ENCODE measurements at regions of chr17 and their contacts with region 1.

Region 1: GRCh38 chr17:50707289-50708049 is at the start of gene ANKRD40:
- DNase-seq: peak; percentile 87 to 95 (median 91)
- ATAC-seq: peak; percentile 94
- H3K4me3 ChIP-seq: peak within 1 kb of the TSS; percentile 79
- H3K4me3 Mint-ChIP-seq: peak within 1 kb of the TSS; percentile 88 to 97 (median 93)
- H3K27ac ChIP-seq: peak within 1 kb of the TSS; percentile 88
- H3K27ac Mint-ChIP-seq: peak within 1 kb of the TSS; percentile 93 to 99 (median 97)
- H3K4me1 ChIP-seq: peaks cover 13 to 20% of the 10 kb centered on the region in 2 donors
- H3K4me1 Mint-ChIP-seq: peaks cover 23 to 68% (median 47%) of the 10 kb centered on the region in 7 donors
- H3K27me3 ChIP-seq: no peaks in the 10 kb centered on the region
- H3K27me3 Mint-ChIP-seq: peaks cover 0 to 2% (median 0%) of the 10 kb centered on the region in 5 donors
- total RNA-seq, gene ANKRD40: 27.4 to 37.2 (median 33.4) TPM

Region 2: DNA sequence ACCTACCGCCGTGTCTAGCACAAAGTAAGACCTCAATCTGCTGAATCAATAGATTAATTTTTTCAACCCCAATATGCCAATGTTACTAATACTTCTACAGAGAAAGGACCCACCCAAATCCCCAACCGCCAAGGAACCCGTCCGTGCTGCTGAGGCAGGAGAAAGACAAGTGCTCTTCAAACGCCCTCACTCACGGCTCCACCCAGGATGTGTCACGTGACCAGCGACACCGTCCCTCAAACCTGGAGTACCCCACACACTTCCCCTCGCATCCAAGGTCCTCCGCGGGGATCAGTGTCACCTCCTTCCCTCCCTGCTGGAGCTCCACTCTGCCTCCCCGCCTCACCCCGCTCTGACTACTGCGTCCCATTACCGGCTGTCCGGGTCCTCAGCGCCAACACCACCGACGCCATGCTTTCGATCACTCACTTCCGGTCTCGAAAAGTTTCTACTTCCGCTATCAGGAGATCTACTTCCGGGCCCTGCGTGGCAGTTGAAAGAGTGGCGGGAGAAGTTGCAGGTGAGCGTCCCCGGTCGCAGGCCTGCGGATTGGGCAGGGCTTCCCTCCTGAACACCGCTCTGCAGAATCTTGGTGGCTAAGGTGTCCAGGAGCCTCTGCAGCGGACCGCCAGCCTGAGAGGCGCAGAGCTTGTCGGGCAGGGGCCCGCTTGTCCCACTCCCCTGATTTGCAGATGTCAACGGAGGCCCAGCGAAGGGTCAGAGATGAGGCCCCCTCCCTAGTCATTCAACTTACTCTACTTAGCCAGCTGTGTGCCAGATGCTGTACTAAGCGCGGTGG is 334.5 kb before region 1 on chr17 and contains the starts of genes EME1 and MRPL27:
- CTCF ChIA-PET with region 1: no interaction called
- POLR2A ChIA-PET with region 1: no interaction called
- intact Hi-C with region 1: loop called (anchors 1 to 5 kb)
- DNase-seq: peak; percentile 81 to 95 (median 92)
- ATAC-seq: peak; percentile 94
- H3K4me3 ChIP-seq: peak within 1 kb of the TSS; percentile 99
- H3K4me3 Mint-ChIP-seq: peak within 1 kb of the TSS; percentile 92 to 100 (median 98)
- H3K27ac ChIP-seq: peak within 1 kb of the TSS; percentile 99
- H3K27ac Mint-ChIP-seq: peak within 1 kb of the TSS; percentile 97 to 100 (median 99)
- H3K4me1 ChIP-seq: peaks cover 9 to 13% of the 10 kb centered on the region in 2 donors
- H3K4me1 Mint-ChIP-seq: peaks cover 18 to 41% (median 31%) of the 10 kb centered on the region in 7 donors
- H3K27me3 ChIP-seq: no peaks in the 10 kb centered on the region
- H3K27me3 Mint-ChIP-seq: no peaks in the 10 kb centered on the region
- total RNA-seq, gene EME1: 0.61 to 17.5 (median 2.2) TPM
- total RNA-seq, gene MRPL27: 29.5 to 64.7 (median 32.0) TPM

Region 3: DNA sequence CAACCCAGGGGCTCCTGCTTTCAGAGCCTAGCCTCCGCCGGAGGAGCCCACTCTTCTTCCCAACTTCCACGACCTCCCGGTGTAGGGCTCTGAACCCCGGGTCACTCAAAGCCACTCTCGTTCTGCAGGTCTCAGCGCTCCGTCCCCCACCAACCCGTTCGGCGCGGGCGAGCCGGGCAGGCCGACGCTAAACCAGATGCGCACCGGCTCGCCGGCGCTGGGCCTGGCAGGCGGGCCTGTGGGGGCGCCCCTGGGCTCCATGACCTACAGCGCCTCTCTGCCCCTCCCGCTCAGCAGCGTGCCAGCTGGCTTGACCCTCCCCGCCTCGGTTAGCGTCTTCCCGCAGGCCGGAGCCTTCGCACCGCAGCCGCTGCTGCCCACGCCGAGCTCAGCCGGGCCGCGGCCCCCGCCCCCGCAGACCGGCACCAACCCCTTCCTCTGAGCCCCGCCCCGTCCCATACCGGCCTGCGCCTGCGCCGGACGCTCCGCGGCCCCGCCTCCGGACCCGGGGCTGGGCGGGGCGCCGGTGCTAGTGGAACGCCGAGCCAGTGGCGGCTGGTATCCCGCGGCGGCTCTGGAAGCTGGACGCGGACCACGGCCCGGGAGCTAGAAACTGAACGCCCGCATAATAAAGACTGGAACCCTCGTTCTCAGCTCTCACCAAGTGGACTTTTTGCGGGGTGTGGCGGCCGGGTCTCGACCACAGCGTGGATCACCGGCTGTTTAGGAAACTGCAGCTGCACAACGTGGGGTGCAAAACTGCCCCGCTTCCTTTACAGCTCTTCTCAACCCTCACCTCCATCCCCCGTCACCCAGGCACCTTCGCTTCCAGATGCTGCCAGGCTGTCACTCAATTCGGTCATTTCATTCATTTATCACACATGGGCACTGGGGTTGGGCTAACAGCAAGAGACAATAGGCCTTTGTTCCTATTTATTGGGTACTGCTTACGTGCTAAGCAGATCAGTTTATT is 165.5 kb before region 1 on chr17:
- CTCF ChIA-PET with region 1: no interaction called
- POLR2A ChIA-PET with region 1: interaction called, 5 read pairs
- intact Hi-C with region 1: loop called (anchors 5 kb)
- DNase-seq: peak; percentile 68 to 96 (median 83)
- ATAC-seq: peak; percentile 90
- H3K4me3 ChIP-seq: peak overlapping the region; percentile 61
- H3K4me3 Mint-ChIP-seq: peak overlapping the region; percentile 83 to 88 (median 85)
- H3K27ac ChIP-seq: peak overlapping the region; percentile 61
- H3K27ac Mint-ChIP-seq: peak overlapping the region; percentile 24 to 90 (median 67)
- H3K4me1 ChIP-seq: peaks cover 10 to 16% of the 10 kb centered on the region in 2 donors
- H3K4me1 Mint-ChIP-seq: peaks cover 0 to 22% (median 22%) of the 10 kb centered on the region in 7 donors
- H3K27me3 ChIP-seq: no peaks in the 10 kb centered on the region
- H3K27me3 Mint-ChIP-seq: peaks cover 0 to 28% (median 7%) of the 10 kb centered on the region in 5 donors

Region 4: DNA sequence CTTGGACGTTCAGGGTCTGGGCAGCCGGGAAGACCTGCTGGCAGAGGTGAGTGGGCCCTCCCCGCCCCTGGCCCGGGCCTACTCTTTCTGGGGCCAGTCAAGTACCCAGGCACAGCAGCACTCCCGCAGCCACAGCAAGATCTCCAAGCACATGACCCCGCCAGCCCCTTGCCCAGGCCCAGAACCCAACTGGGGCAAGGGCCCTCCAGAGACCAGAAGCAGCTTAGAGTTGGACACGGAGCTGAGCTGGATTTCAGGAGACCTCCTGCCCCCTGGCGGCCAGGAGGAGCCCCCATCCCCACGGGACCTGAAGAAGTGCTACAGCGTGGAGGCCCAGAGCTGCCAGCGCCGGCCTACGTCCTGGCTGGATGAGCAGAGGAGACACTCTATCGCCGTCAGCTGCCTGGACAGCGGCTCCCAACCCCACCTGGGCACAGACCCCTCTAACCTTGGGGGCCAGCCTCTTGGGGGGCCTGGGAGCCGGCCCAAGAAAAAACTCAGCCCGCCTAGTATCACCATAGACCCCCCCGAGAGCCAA is 81.4 kb before region 1 on chr17:
- CTCF ChIA-PET with region 1: no interaction called
- POLR2A ChIA-PET with region 1: no interaction called
- intact Hi-C with region 1: loop called in 1 of 2 experiments (anchors 2 kb)
- DNase-seq: peak; percentile 37 to 63 (median 54)
- ATAC-seq: peak; percentile 64
- H3K4me3 ChIP-seq: no peak overlapping the region
- H3K4me3 Mint-ChIP-seq: no peak overlapping the region
- H3K27ac ChIP-seq: no peak overlapping the region
- H3K27ac Mint-ChIP-seq: no peak overlapping the region
- H3K4me1 ChIP-seq: no peaks in the 10 kb centered on the region
- H3K4me1 Mint-ChIP-seq: peaks cover 0 to 7% (median 0%) of the 10 kb centered on the region in 7 donors
- H3K27me3 ChIP-seq: peaks cover 0 to 10% of the 10 kb centered on the region in 2 donors
- H3K27me3 Mint-ChIP-seq: peaks cover 27 to 54% (median 39%) of the 10 kb centered on the region in 5 donors

Region 5: GRCh38 chr17:50949989-50950881 is 242.8 kb after region 1 on chr17:
- CTCF ChIA-PET with region 1: no interaction called
- POLR2A ChIA-PET with region 1: no interaction called
- intact Hi-C with region 1: no loop called
- DNase-seq: peak; percentile 34 to 71 (median 51)
- ATAC-seq: peak; percentile 88
- H3K4me3 ChIP-seq: no peak overlapping the region
- H3K4me3 Mint-ChIP-seq: peak overlapping the region in 2 of 10 donors; percentile 5 to 62
- H3K27ac ChIP-seq: no peak overlapping the region
- H3K27ac Mint-ChIP-seq: peak overlapping the region in 5 of 9 donors; percentile 31 to 90 (median 69)
- H3K4me1 ChIP-seq: peaks cover 0 to 6% of the 10 kb centered on the region in 2 donors
- H3K4me1 Mint-ChIP-seq: peaks cover 14 to 39% (median 24%) of the 10 kb centered on the region in 7 donors
- H3K27me3 ChIP-seq: no peaks in the 10 kb centered on the region
- H3K27me3 Mint-ChIP-seq: no peaks in the 10 kb centered on the region